Right ventricle myocardium inferior (tissue), 1 donor: ENCODE measurements at regions of chr21 and their contacts with region 1.

Region 1: DNA sequence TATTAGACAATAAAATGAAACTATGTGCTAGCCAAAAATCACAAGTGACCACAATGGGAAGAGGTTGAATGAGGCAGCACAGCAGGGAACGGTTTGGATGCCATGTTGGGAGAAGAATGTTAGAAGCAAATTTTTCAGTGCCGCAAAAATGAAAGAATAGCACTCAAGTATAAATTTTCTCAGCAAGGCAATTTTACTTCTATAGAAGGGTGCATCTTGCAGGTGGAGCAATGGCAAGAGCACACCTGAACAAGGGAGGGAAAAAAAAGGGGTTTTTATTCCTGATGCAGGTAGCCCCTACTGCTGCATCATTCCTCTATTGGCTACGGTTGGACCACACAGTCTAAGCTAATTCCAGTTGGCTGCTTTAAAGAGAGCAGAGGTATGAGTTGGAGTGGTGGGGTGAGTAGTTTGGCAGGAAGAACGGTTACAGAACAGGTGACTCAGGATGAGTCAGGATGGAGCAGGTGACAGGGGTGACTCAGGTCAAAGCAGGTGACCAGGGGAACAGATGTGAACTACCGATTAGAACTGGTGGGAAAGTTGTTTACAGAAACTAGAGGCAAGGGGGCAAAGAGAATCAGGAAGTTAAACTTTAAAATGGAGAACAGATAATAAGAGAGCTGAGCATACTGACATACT is 301.1 kb upstream of the NRIP1 start:
- DNase-seq: no peak
- ATAC-seq: no peak

Region 2: DNA sequence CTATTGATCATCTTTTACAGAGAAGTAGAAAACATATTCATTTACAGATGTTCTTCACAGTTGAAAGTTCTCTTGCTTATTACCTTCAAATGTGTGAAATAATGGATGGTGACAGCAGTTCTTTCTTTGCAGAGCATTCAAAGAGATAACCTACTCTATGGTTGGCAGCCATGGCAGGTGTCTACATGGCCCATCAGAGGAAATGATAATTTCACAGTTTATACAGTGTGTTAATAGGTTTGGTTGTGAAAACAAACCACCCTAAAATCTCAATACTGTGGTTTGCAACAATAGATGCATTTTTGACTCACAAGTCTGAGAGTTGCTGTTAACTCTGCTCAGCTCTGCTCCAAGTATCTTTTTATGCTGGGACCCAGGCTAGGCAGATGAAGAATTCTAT is 578.6 kb before region 1 on chr21:
- intact Hi-C with region 1: loop called (anchors 5 kb)
- DNase-seq: no peak
- ATAC-seq: no peak

Region 3: GRCh38 chr21:15379776-15380175 is 13.9 kb after region 1 on chr21:
- intact Hi-C with region 1: loop called (anchors 1 kb)
- DNase-seq: no peak
- ATAC-seq: no peak

Region 4: GRCh38 chr21:15430577-15430976 is 64.7 kb after region 1 on chr21:
- intact Hi-C with region 1: no loop called
- DNase-seq: no peak
- ATAC-seq: no peak